Endothelial cell of umbilical vein (primary cell): ENCODE measurements at regions of chr6 and their contacts with region 1.

Region 1: GRCh38 chr6:77880499-77880898 is 227.7 kb downstream of the MEI4 start:
- DNase-seq: peak; percentile 17
- H3K4me3 ChIP-seq: no peak overlapping the region
- H3K27ac ChIP-seq: no peak overlapping the region
- H3K4me1 ChIP-seq: peaks cover 10% of the 10 kb centered on the region
- H3K27me3 ChIP-seq: no peaks in the 10 kb centered on the region
- CTCF ChIP-seq: no peak
- POLR2A ChIP-seq: no peak

Region 2: GRCh38 chr6:77650098-77650663 is 230.3 kb before region 1 on chr6:
- CTCF ChIA-PET with region 1: no interaction called
- POLR2A ChIA-PET with region 1: no interaction called
- dilution Hi-C with region 1: no loop called
- intact Hi-C with region 1: no loop called
- DNase-seq: peak; percentile 24
- H3K4me3 ChIP-seq: peak overlapping the region; percentile 7 to 37 (median 7)
- H3K27ac ChIP-seq: no peak overlapping the region
- H3K4me1 ChIP-seq: peaks cover 4% of the 10 kb centered on the region
- H3K27me3 ChIP-seq: peaks cover 0 to 2% of the 10 kb centered on the region in 2 experiments
- CTCF ChIP-seq: peak; percentile 33 to 41
- POLR2A ChIP-seq: no peak

Region 3: DNA sequence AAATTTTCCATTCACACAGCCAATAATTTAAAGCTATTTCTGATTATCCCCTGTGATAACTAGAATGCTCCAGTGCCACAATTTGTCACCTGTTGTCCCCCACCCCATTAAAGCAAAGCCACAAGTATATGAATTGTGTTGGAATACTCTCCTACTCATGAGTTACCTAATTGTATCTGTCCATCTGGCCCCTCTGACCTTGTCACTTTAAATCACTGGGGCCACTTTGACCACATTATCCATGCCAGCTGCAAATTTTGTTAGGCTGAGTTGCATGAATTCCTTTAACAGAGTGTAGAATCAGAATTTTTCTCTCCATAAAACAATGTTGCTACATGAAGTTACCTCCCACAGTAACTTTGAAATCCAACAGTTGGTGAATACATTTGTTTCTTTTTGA is 23.1 kb before region 1 on chr6:
- CTCF ChIA-PET with region 1: no interaction called
- POLR2A ChIA-PET with region 1: no interaction called
- dilution Hi-C with region 1: no loop called
- intact Hi-C with region 1: no loop called
- DNase-seq: no peak
- H3K4me3 ChIP-seq: no peak overlapping the region
- H3K27ac ChIP-seq: no peak overlapping the region
- H3K4me1 ChIP-seq: no peaks in the 10 kb centered on the region
- H3K27me3 ChIP-seq: no peaks in the 10 kb centered on the region
- CTCF ChIP-seq: no peak
- POLR2A ChIP-seq: no peak

Region 4: DNA sequence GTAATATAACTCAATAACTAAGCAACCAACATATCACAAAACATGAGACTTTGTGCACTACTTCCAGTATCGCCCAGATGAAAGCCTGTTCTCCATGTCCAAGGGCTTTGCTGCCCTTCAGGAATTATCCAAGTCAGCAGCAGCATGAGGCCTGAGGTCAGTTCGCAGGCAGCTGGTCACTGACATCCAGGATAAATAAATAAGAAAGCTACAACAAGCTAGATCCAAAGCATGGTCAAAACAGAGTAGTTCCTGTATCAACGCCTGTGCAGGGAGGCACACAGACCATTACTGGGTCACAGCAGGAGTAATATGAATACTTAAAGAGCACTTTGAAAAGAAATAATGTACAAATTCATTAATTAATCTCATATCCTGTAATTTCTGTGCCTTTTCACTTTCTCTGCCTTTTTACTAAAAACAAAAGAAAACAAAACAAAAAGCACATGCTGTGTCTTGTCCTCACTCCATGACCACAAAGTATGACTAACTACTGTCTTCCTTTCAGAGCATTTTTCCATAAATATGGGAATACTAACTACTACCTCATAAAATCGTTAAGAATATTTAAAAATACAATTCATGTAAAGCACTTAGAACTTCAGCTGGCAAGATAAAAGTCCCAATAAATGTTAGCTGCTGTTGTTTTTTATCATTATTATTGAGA is 612.0 kb after region 1 on chr6:
- CTCF ChIA-PET with region 1: no interaction called
- POLR2A ChIA-PET with region 1: no interaction called
- dilution Hi-C with region 1: no loop called
- intact Hi-C with region 1: loop called (anchors 5 kb)
- DNase-seq: peak; percentile 82
- H3K4me3 ChIP-seq: peak overlapping the region in 1 of 3 experiments; percentile 19
- H3K27ac ChIP-seq: peak overlapping the region; percentile 63
- H3K4me1 ChIP-seq: peaks cover 53% of the 10 kb centered on the region
- H3K27me3 ChIP-seq: no peaks in the 10 kb centered on the region
- CTCF ChIP-seq: no peak
- POLR2A ChIP-seq: no peak